Psoas muscle (tissue), 8 donors: ENCODE measurements at regions of chr9 and their contacts with region 1.

Region 1: DNA sequence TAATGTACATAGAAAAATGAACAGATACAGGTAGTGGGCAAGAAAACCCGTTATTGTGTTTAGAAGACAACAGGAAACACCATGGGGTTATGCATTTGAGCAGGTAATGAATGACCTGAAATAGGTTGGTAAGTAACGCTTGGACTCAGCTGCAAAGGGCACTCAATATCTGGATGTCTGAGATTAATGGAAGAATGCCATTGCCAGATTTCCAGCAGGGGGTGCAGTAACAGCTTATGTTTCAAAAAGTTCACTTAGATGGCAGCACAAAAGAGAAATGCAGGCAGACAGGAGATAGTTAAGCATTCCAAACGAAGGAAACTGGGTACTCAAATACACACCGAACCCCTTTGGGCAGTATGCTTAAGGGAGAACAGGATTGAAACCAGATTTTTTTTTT is 285.5 kb upstream of the VLDLR start:
- DNase-seq: no peak
- ATAC-seq: no peak
- H3K4me3 ChIP-seq: no peak overlapping the region
- H3K27ac ChIP-seq: no peak overlapping the region
- H3K4me1 ChIP-seq: no peaks in the 10 kb centered on the region
- H3K27me3 ChIP-seq: no peaks in the 10 kb centered on the region
- CTCF ChIP-seq: peak; percentile 12

Region 2: DNA sequence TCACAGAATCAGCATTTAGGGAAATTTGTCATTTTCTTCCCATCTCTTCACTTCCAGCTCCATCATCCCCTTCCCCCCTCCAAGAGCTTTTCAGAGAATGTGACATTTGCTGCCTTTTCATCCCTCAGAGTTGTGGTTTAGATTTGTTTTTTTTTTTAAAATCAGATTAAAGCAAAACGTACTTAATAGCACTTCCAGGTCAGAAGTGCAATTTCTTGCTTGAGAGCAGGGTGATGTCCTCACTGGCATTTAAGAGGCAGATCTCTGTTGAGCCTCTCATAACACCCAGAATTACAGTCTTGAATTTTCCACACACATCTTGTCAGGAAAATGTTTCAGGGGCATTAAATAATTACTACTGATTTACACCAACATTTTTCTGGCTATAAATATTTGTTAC is 48.7 kb after region 1 on chr9:
- intact Hi-C with region 1: loop called in 1 of 2 experiments (anchors 5 kb)
- DNase-seq: no peak
- ATAC-seq: no peak
- H3K4me3 ChIP-seq: no peak overlapping the region
- H3K27ac ChIP-seq: no peak overlapping the region
- H3K4me1 ChIP-seq: no peaks in the 10 kb centered on the region
- H3K27me3 ChIP-seq: no peaks in the 10 kb centered on the region
- CTCF ChIP-seq: no peak